Calu3 (cell line): ENCODE measurements at regions of chr15 and their contacts with region 1.

Region 1: DNA sequence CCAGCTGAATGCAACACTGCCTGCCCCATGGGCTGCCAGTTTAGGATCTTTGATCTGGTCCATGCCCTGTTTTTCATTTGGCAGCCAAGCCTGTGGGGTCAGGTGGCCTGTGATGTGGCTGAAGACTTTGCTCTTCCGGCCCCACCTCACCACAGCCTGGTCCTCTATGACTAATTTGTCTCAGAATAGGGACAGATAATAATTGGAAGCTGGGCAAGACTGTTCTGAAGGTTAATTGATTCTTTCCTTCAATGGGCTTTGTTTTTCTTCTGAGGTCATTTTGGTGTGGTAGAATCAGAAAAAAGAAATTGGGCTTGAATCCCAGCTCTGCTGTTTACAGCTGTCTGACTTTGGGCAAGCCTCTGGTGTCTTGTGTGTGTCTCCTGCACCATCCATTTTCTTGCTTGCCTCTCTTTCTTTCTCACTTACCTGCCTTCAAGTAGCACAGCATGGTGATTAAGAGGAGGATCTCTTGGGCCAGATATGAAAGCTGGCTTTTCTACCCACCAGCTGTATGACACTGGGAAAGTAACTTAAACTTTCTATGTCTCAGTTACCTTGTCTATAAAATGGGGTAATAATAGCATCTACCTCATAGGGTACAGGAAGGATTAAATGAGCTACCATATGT is 24.2 kb downstream of the ABHD2 start:
- DNase-seq: peak; percentile 85
- H3K4me3 Mint-ChIP-seq: peak overlapping the region; percentile 8
- H3K27ac Mint-ChIP-seq: peak overlapping the region; percentile 87
- H3K4me1 Mint-ChIP-seq: peaks cover 77% of the 10 kb centered on the region
- H3K27me3 Mint-ChIP-seq: no peaks in the 10 kb centered on the region
- CTCF ChIP-seq: no peak

Region 2: GRCh38 chr15:89068325-89068784 is 44.1 kb before region 1 on chr15:
- CTCF ChIA-PET with region 1: interaction called, 4 read pairs
- intact Hi-C with region 1: loop called (anchors 2 kb)
- DNase-seq: peak; percentile 45
- H3K4me3 Mint-ChIP-seq: no peak overlapping the region
- H3K27ac Mint-ChIP-seq: peak overlapping the region; percentile 88
- H3K4me1 Mint-ChIP-seq: peaks cover 61% of the 10 kb centered on the region
- H3K27me3 Mint-ChIP-seq: no peaks in the 10 kb centered on the region
- CTCF ChIP-seq: no peak

Region 3: DNA sequence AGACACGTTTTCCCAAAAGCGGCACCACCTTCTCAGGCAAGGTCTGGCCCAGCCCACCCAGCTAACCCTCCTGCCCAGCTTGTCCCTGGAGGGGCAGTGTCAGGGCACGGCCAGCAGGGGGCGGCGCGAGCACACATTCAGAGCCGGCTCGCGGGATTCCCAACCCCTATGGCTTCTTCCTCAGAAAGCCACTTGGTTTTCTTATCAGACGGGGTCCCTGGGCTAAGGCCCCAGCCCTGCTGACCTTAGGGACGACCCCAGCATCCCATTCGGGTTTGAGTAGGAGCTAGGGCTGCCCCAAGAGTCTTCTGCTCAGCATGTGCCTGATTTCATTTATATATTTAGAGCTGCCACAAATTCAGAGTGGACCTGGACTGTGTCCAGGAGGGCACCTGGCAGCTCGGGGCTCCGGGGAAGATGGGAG is 94.5 kb after region 1 on chr15:
- CTCF ChIA-PET with region 1: no interaction called
- intact Hi-C with region 1: no loop called
- DNase-seq: peak; percentile 90
- H3K4me3 Mint-ChIP-seq: peak overlapping the region; percentile 15
- H3K27ac Mint-ChIP-seq: no peak overlapping the region
- H3K4me1 Mint-ChIP-seq: peaks cover 8% of the 10 kb centered on the region
- H3K27me3 Mint-ChIP-seq: peaks cover 26% of the 10 kb centered on the region
- CTCF ChIP-seq: peak; percentile 96